ENCODE measurements at regions of chr18 and their contacts with region 1.

Region 1: GRCh38 chr18:77087393-77088141 is 45.0 kb downstream of the MBP start:
- DNase-seq: no peak
- ATAC-seq: peak; percentile 94
- H3K4me3 ChIP-seq: peak overlapping the region; percentile 32 to 46 (median 42); a peak in 5 of 6 replicates
- H3K27ac ChIP-seq: no peak overlapping the region
- H3K4me1 ChIP-seq: peaks cover 35% of the 10 kb centered on the region
- H3K27me3 ChIP-seq: no peaks in the 10 kb centered on the region
- CTCF ChIP-seq: no peak
- EP300 ChIP-seq: no peak
- POLR2A ChIP-seq: no peak
- RAD21 ChIP-seq: no peak

Region 2: GRCh38 chr18:76937597-76937996 is 150.0 kb before region 1 on chr18:
- CTCF ChIA-PET with region 1: no interaction called
- POLR2A ChIA-PET with region 1: no interaction called
- in situ Hi-C with region 1: no loop called
- intact Hi-C with region 1: no loop called
- DNase-seq: no peak
- ATAC-seq: no peak
- H3K4me3 ChIP-seq: no peak overlapping the region
- H3K27ac ChIP-seq: no peak overlapping the region
- H3K4me1 ChIP-seq: no peaks in the 10 kb centered on the region
- H3K27me3 ChIP-seq: no peaks in the 10 kb centered on the region
- CTCF ChIP-seq: no peak
- EP300 ChIP-seq: no peak
- POLR2A ChIP-seq: no peak
- RAD21 ChIP-seq: no peak

Region 3: DNA sequence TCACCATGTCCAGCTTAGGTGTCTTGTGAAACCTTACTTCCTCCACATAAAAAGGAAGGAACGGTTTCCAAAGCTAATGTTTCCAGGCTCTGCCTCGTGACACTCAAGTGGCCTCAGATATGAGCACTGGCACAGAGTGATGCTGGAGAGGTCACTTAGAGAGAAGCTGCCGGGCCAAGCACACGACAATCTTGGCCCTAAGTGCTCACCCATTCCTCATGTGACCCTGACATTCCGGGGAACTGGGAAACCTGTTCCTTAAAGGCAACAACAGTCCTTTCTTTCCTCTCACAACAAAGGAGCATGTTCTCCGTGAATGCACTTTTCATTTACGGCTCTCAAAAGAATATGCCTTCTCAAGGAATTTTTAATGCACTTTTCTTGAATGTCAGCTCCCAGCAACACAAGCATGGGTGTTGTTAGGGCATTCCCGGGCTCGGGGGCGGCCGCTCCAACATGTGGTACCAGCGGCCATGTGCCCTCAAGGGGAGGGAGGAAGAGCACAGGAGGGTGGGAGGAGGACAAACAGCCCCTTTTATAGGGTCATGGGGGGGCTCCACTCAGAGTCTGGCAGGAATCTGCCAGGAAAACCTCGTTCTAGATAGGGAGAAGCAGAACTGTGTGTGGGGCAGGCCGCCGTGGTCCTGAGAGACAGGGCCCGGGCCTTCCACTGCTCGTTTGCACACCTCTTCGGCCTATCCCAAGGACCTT is 73.6 kb before region 1 on chr18:
- CTCF ChIA-PET with region 1: no interaction called
- POLR2A ChIA-PET with region 1: no interaction called
- in situ Hi-C with region 1: no loop called
- intact Hi-C with region 1: no loop called
- DNase-seq: no peak
- ATAC-seq: no peak
- H3K4me3 ChIP-seq: no peak overlapping the region
- H3K27ac ChIP-seq: no peak overlapping the region
- H3K4me1 ChIP-seq: no peaks in the 10 kb centered on the region
- H3K27me3 ChIP-seq: no peaks in the 10 kb centered on the region
- CTCF ChIP-seq: no peak
- EP300 ChIP-seq: no peak
- POLR2A ChIP-seq: no peak
- RAD21 ChIP-seq: no peak

Region 4: GRCh38 chr18:77114415-77115191 is 27.0 kb after region 1 on chr18:
- CTCF ChIA-PET with region 1: no interaction called
- POLR2A ChIA-PET with region 1: no interaction called
- in situ Hi-C with region 1: no loop called
- intact Hi-C with region 1: loop called (anchors 2 kb)
- DNase-seq: peak; percentile 93
- ATAC-seq: peak; percentile 95
- H3K4me3 ChIP-seq: peak overlapping the region; percentile 19 to 64 (median 49); a peak in 5 of 6 replicates
- H3K27ac ChIP-seq: peak overlapping the region; percentile 87
- H3K4me1 ChIP-seq: peaks cover 54% of the 10 kb centered on the region
- H3K27me3 ChIP-seq: no peaks in the 10 kb centered on the region
- CTCF ChIP-seq: peak; percentile 4; the same call in 1 of the 2 replicates
- EP300 ChIP-seq: peak in 1 of 2 experiments; percentile 37; a peak in 1 of 4 replicates
- POLR2A ChIP-seq: peak; percentile 64 to 70
- RAD21 ChIP-seq: no peak; the same call in 1 of the 2 replicates

Measured in HepG2 (cell line).